HEK293 (cell line): ENCODE measurements at regions of chr1 and their contacts with region 1.

Region 1: GRCh38 chr1:84944767-84945486 is 51.9 kb upstream of the LPAR3 start:
- H3K4me3 ChIP-seq: no peak overlapping the region
- H3K27ac ChIP-seq: no peak overlapping the region
- H3K4me1 ChIP-seq: no peaks in the 10 kb centered on the region
- CTCF ChIP-seq: peak; percentile 86

Region 2: DNA sequence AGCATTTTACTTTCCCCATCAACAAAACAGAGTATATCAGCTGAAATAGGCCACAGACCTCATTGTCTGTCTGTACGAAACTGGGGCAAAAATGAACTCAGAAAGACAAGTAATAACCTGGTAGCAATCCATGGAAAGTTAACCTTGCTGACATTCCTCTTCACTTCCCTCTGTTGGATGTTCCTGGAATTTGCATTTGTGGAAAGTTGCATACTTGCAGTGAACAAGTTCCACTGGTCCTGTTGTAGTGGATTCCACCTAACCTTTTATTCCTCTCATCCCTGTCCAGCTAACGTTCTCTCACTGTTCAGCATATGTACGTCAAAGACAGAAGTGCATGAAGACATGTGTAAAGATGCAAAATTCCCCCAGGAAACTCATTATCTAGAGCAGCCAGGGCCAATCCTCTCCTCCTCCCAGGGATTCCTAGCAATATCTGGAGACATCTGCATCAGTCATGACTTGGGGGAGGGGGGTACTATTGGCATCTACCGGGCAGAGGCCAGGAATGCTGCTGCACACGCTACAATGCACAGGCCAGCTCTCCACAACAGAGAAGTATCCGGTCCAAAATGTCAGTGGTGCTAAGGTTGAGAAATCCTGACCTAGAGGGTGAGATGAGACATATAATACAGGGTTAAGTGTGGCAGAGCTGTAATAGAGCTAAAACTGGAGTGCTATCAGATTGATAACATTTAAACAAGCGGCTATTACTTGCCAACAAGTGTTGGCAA is 60.1 kb before region 1 on chr1:
- CTCF ChIA-PET with region 1: no interaction called
- POLR2A ChIA-PET with region 1: no interaction called
- H3K4me3 ChIP-seq: no peak overlapping the region
- H3K27ac ChIP-seq: no peak overlapping the region
- H3K4me1 ChIP-seq: no peaks in the 10 kb centered on the region
- CTCF ChIP-seq: no peak

Region 3: GRCh38 chr1:84959294-84959693 is 14.4 kb after region 1 on chr1:
- CTCF ChIA-PET with region 1: interaction called, 59 read pairs
- POLR2A ChIA-PET with region 1: no interaction called
- H3K4me3 ChIP-seq: no peak overlapping the region
- H3K27ac ChIP-seq: no peak overlapping the region
- H3K4me1 ChIP-seq: no peaks in the 10 kb centered on the region
- CTCF ChIP-seq: no peak

Region 4: DNA sequence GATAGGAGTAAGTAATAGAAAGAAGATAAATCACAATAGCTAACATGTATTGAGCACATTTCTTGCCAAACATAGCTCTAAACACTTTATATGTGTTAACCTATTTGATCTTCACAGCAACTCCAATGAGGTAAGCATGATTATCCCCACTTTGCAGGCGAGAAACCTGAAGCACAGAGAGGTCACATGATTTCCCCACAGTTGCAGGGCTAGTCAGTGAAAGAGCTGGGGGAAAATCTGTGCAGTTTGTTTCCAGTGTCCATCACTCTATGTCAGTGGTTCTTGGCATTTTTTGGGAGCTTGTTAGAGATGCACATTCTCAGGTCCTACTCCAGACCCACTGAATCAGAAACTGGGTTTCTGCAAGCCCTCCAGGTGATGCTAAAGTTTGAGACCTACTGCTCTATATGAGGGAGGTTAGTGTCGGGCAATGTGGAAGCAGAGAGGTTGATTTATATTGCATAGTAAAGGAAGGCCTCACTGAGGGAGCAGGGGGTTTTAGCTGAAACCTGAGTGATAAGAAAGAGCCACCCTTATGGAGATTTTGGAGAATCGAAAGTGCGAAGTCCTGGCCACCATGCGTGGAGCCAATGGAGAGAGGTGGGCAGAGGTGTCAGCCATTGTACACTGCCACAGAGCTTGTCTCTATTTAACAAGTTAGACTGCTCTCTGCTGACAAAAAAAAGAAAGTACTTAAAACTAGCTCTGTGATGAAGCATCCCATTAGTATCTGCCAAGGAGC is 82.5 kb after region 1 on chr1:
- CTCF ChIA-PET with region 1: interaction called, 59 read pairs
- POLR2A ChIA-PET with region 1: no interaction called
- H3K4me3 ChIP-seq: no peak overlapping the region
- H3K27ac ChIP-seq: no peak overlapping the region
- H3K4me1 ChIP-seq: no peaks in the 10 kb centered on the region
- CTCF ChIP-seq: no peak

Region 5: DNA sequence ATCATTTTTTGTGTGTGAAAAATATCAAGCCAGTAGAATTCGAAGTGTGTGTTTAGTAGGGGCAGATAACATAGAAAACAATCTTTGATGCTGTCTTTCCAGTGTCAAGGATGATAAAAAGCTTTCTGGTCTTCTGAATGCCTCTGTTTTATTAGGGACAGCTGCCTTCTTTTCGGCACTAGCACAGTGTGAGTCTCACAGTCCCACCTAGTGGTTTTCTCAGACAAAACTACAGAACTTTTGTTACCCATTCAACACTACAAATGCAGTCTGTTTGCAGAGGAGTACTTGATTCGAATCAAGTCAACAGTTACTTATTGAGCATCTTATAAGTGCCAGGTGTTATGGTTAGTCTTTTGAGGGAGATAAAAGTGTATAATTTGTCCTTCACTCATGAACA is 134.0 kb after region 1 on chr1:
- CTCF ChIA-PET with region 1: interaction called, 17 read pairs
- POLR2A ChIA-PET with region 1: no interaction called
- H3K4me3 ChIP-seq: no peak overlapping the region
- H3K27ac ChIP-seq: no peak overlapping the region
- H3K4me1 ChIP-seq: no peaks in the 10 kb centered on the region
- CTCF ChIP-seq: no peak; the same call in 1 of the 2 replicates

Region 6: GRCh38 chr1:85240174-85240601 is 295.3 kb after region 1 on chr1:
- CTCF ChIA-PET with region 1: interaction called, 20 read pairs
- POLR2A ChIA-PET with region 1: interaction called, 3 read pairs
- H3K4me3 ChIP-seq: no peak overlapping the region
- H3K27ac ChIP-seq: no peak overlapping the region; the same call in 1 of the 2 replicates
- H3K4me1 ChIP-seq: peaks cover 11% of the 10 kb centered on the region
- CTCF ChIP-seq: peak; percentile 41; the same call in 1 of the 2 replicates